ENCODE measurements at regions of chr12 and their contacts with region 1.

Region 1: GRCh38 chr12:14845350-14845750 is 2.0 kb upstream of the ART4 start:
- DNase-seq: peak in 7 of 9 donors; percentile 23 to 63 (median 59)
- ATAC-seq: peak; percentile 80
- H3K4me3 ChIP-seq: no peak overlapping the region
- H3K4me3 Mint-ChIP-seq: peak overlapping the region in 7 of 10 donors; percentile 1 to 71 (median 27)
- H3K27ac ChIP-seq: no peak overlapping the region
- H3K27ac Mint-ChIP-seq: peak overlapping the region in 6 of 9 donors; percentile 14 to 68 (median 38)
- H3K4me1 ChIP-seq: no peaks in the 10 kb centered on the region
- H3K4me1 Mint-ChIP-seq: peaks cover 5 to 13% (median 8%) of the 10 kb centered on the region in 7 donors
- H3K27me3 ChIP-seq: no peaks in the 10 kb centered on the region
- H3K27me3 Mint-ChIP-seq: peaks cover 0 to 12% (median under 1%) of the 10 kb centered on the region in 5 donors

Region 2: GRCh38 chr12:14239350-14239934 is 605.9 kb before region 1 on chr12:
- CTCF ChIA-PET with region 1: no interaction called
- POLR2A ChIA-PET with region 1: no interaction called
- intact Hi-C with region 1: loop called in 1 of 2 experiments (anchors 2 kb)
- DNase-seq: peak in 2 of 9 donors; percentile 12 to 40
- ATAC-seq: peak; percentile 69
- H3K4me3 ChIP-seq: peak overlapping the region; percentile 52
- H3K4me3 Mint-ChIP-seq: peak overlapping the region; percentile 75 to 90 (median 82)
- H3K27ac ChIP-seq: peak overlapping the region; percentile 1
- H3K27ac Mint-ChIP-seq: peak overlapping the region; percentile 37 to 93 (median 87)
- H3K4me1 ChIP-seq: peaks cover 0 to 6% of the 10 kb centered on the region in 2 donors
- H3K4me1 Mint-ChIP-seq: peaks cover 17 to 29% (median 22%) of the 10 kb centered on the region in 7 donors
- H3K27me3 ChIP-seq: no peaks in the 10 kb centered on the region
- H3K27me3 Mint-ChIP-seq: no peaks in the 10 kb centered on the region

Region 3: GRCh38 chr12:14567351-14568162 is 277.8 kb before region 1 on chr12 and contains the start of gene PLBD1:
- CTCF ChIA-PET with region 1: no interaction called
- POLR2A ChIA-PET with region 1: no interaction called
- intact Hi-C with region 1: no loop called
- DNase-seq: no peak
- ATAC-seq: peak; percentile 72
- H3K4me3 ChIP-seq: no peak within 1 kb of the TSS
- H3K4me3 Mint-ChIP-seq: peak within 1 kb of the TSS; percentile 20 to 64 (median 38)
- H3K27ac ChIP-seq: no peak within 1 kb of the TSS
- H3K27ac Mint-ChIP-seq: no peak within 1 kb of the TSS
- H3K4me1 ChIP-seq: no peaks in the 10 kb centered on the region
- H3K4me1 Mint-ChIP-seq: peaks cover 0 to 9% (median 4%) of the 10 kb centered on the region in 7 donors
- H3K27me3 ChIP-seq: no peaks in the 10 kb centered on the region
- H3K27me3 Mint-ChIP-seq: peaks cover 39 to 53% (median 48%) of the 10 kb centered on the region in 5 donors
- total RNA-seq, gene PLBD1: 0.30 to 74.1 (median 4.6) TPM in 4 of 5 experiments, not detected in the other

Region 4: DNA sequence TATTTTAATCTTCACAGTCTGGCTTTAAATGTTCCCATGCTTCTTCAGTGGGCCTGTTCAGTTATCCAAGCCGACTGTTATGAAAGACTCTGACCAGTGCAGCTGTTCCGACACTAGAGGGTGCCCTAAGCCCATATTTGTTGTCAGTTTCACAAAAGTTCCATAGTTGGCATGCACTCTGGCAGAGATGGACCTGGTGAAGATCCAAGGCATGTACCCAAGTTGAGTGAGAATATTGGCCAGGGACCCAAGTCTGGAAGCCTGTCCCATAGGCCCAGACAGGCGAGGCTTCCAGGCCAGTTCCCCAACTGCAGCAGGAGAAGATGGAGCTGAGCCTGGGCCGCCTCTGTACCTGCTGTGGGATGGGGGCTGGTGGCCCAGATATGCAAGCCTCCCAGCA is 121.6 kb before region 1 on chr12:
- CTCF ChIA-PET with region 1: interaction called, 4 read pairs
- POLR2A ChIA-PET with region 1: no interaction called
- intact Hi-C with region 1: loop called (anchors 1 to 2 kb)
- DNase-seq: peak; percentile 19 to 67 (median 59)
- ATAC-seq: peak; percentile 83
- H3K4me3 ChIP-seq: no peak overlapping the region
- H3K4me3 Mint-ChIP-seq: no peak overlapping the region
- H3K27ac ChIP-seq: no peak overlapping the region
- H3K27ac Mint-ChIP-seq: no peak overlapping the region
- H3K4me1 ChIP-seq: no peaks in the 10 kb centered on the region
- H3K4me1 Mint-ChIP-seq: peaks cover 0 to 4% (median 0%) of the 10 kb centered on the region in 7 donors
- H3K27me3 ChIP-seq: no peaks in the 10 kb centered on the region
- H3K27me3 Mint-ChIP-seq: peaks cover 0 to 34% (median 10%) of the 10 kb centered on the region in 5 donors

Region 5: GRCh38 chr12:14884458-14884878 is 39.1 kb after region 1 on chr12:
- CTCF ChIA-PET with region 1: interaction called, 5 read pairs
- POLR2A ChIA-PET with region 1: no interaction called
- intact Hi-C with region 1: loop called in 1 of 2 experiments (anchors 1 kb)
- DNase-seq: peak in 8 of 9 donors; percentile 59 to 93 (median 88)
- ATAC-seq: peak; percentile 95
- H3K4me3 ChIP-seq: no peak overlapping the region
- H3K4me3 Mint-ChIP-seq: peak overlapping the region in 9 of 10 donors; percentile 62 to 83 (median 77)
- H3K27ac ChIP-seq: peak overlapping the region; percentile 60
- H3K27ac Mint-ChIP-seq: peak overlapping the region in 8 of 9 donors; percentile 49 to 95 (median 92)
- H3K4me1 ChIP-seq: peaks cover 0 to 27% of the 10 kb centered on the region in 2 donors
- H3K4me1 Mint-ChIP-seq: peaks cover 15 to 75% (median 60%) of the 10 kb centered on the region in 7 donors
- H3K27me3 ChIP-seq: no peaks in the 10 kb centered on the region
- H3K27me3 Mint-ChIP-seq: peaks cover 0 to 29% (median 8%) of the 10 kb centered on the region in 5 donors

Region 6: GRCh38 chr12:14937689-14938088 is 92.3 kb after region 1 on chr12:
- CTCF ChIA-PET with region 1: interaction called, 7 read pairs
- POLR2A ChIA-PET with region 1: no interaction called
- intact Hi-C with region 1: loop called in 1 of 2 experiments (anchors 1 kb)
- DNase-seq: no peak
- ATAC-seq: peak; percentile 57
- H3K4me3 ChIP-seq: no peak overlapping the region
- H3K4me3 Mint-ChIP-seq: peak overlapping the region in 5 of 10 donors; percentile 3 to 59 (median 25)
- H3K27ac ChIP-seq: peak overlapping the region; percentile 36
- H3K27ac Mint-ChIP-seq: peak overlapping the region; percentile 56 to 94 (median 84)
- H3K4me1 ChIP-seq: peaks cover 0 to 22% of the 10 kb centered on the region in 2 donors
- H3K4me1 Mint-ChIP-seq: peaks cover 34 to 81% (median 69%) of the 10 kb centered on the region in 7 donors
- H3K27me3 ChIP-seq: no peaks in the 10 kb centered on the region
- H3K27me3 Mint-ChIP-seq: no peaks in the 10 kb centered on the region

Region 7: DNA sequence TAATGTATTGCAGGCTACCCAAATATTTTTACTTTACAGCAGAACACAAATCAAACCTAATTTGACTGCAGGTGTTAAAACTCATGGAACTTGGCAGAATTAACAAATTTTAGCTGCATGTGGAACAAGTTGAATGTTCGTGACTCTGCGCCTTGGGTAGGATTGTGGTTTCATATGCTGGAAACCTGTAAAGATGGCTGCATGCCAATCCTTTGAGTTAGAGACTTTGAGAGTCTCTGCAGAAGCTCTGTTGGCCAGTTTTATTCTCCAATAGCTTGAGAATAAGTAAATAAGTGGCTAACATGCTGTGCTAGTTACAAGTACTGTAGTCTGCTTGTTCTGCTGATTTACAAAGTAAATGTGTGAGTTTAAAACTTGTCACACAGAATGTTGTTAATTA is 205.3 kb after region 1 on chr12:
- CTCF ChIA-PET with region 1: no interaction called
- POLR2A ChIA-PET with region 1: no interaction called
- intact Hi-C with region 1: no loop called
- DNase-seq: peak in 3 of 9 donors; percentile 34 to 56 (median 36)
- ATAC-seq: no peak
- H3K4me3 ChIP-seq: no peak overlapping the region
- H3K4me3 Mint-ChIP-seq: peak overlapping the region in 3 of 10 donors; percentile 50 to 61 (median 54)
- H3K27ac ChIP-seq: no peak overlapping the region
- H3K27ac Mint-ChIP-seq: peak overlapping the region in 1 of 9 donors; percentile 57
- H3K4me1 ChIP-seq: peaks cover 0 to 3% of the 10 kb centered on the region in 2 donors
- H3K4me1 Mint-ChIP-seq: peaks cover 0 to 31% (median 0%) of the 10 kb centered on the region in 7 donors
- H3K27me3 ChIP-seq: no peaks in the 10 kb centered on the region
- H3K27me3 Mint-ChIP-seq: peaks cover 0 to 18% (median 12%) of the 10 kb centered on the region in 5 donors

Region 8: GRCh38 chr12:15220994-15221885 is 375.9 kb after region 1 on chr12 and contains the start of gene RERG:
- CTCF ChIA-PET with region 1: interaction called, 8 read pairs
- POLR2A ChIA-PET with region 1: no interaction called
- intact Hi-C with region 1: loop called (anchors 1 to 2 kb)
- DNase-seq: peak; percentile 57 to 86 (median 77)
- ATAC-seq: peak; percentile 99
- H3K4me3 ChIP-seq: peak within 1 kb of the TSS; percentile 43
- H3K4me3 Mint-ChIP-seq: peak within 1 kb of the TSS; percentile 61 to 83 (median 78)
- H3K27ac ChIP-seq: no peak within 1 kb of the TSS
- H3K27ac Mint-ChIP-seq: no peak within 1 kb of the TSS
- H3K4me1 ChIP-seq: peaks cover 6% of the 10 kb centered on the region in 2 donors
- H3K4me1 Mint-ChIP-seq: peaks cover 0 to 17% (median 9%) of the 10 kb centered on the region in 7 donors
- H3K27me3 ChIP-seq: no peaks in the 10 kb centered on the region
- H3K27me3 Mint-ChIP-seq: peaks cover 25 to 43% (median 32%) of the 10 kb centered on the region in 5 donors
- total RNA-seq, gene RERG: 0.35 TPM in 1 of 5 experiments, not detected in the others

Measured in naive thymus-derived CD4-positive, alpha-beta T cell (primary cell).